ENCODE measurements at regions of chr17 and their contacts with region 1.

Region 1: GRCh38 chr17:72119873-72120641 is 763 bp upstream of the SOX9 start:
- DNase-seq: no peak
- ATAC-seq: no peak
- H3K4me3 ChIP-seq: no peak overlapping the region
- H3K4me3 Mint-ChIP-seq: no peak overlapping the region
- H3K27ac ChIP-seq: no peak overlapping the region
- H3K27ac Mint-ChIP-seq: no peak overlapping the region
- H3K4me1 ChIP-seq: peaks cover 0 to 26% of the 10 kb centered on the region in 2 experiments
- H3K4me1 Mint-ChIP-seq: peaks cover 16 to 31% (median 18%) of the 10 kb centered on the region in 3 donors
- H3K27me3 ChIP-seq: peaks cover 22 to 79% of the 10 kb centered on the region in 2 experiments
- H3K27me3 Mint-ChIP-seq: peaks cover 62 to 71% of the 10 kb centered on the region in 2 donors

Region 2: GRCh38 chr17:70767102-70767701 is 1352.9 kb before region 1 on chr17:
- CTCF ChIA-PET with region 1: interaction called in 1 of 2 experiments, 11 read pairs
- POLR2A ChIA-PET with region 1: no interaction called
- DNase-seq: no peak
- ATAC-seq: no peak
- H3K4me3 ChIP-seq: no peak overlapping the region
- H3K4me3 Mint-ChIP-seq: no peak overlapping the region
- H3K27ac ChIP-seq: no peak overlapping the region
- H3K27ac Mint-ChIP-seq: no peak overlapping the region
- H3K4me1 ChIP-seq: no peaks in the 10 kb centered on the region
- H3K4me1 Mint-ChIP-seq: no peaks in the 10 kb centered on the region
- H3K27me3 ChIP-seq: no peaks in the 10 kb centered on the region
- H3K27me3 Mint-ChIP-seq: no peaks in the 10 kb centered on the region

Region 3: GRCh38 chr17:71168053-71168741 is 951.9 kb before region 1 on chr17:
- CTCF ChIA-PET with region 1: no interaction called
- POLR2A ChIA-PET with region 1: no interaction called
- DNase-seq: no peak
- ATAC-seq: no peak
- H3K4me3 ChIP-seq: no peak overlapping the region
- H3K4me3 Mint-ChIP-seq: no peak overlapping the region
- H3K27ac ChIP-seq: no peak overlapping the region
- H3K27ac Mint-ChIP-seq: no peak overlapping the region
- H3K4me1 ChIP-seq: no peaks in the 10 kb centered on the region
- H3K4me1 Mint-ChIP-seq: no peaks in the 10 kb centered on the region
- H3K27me3 ChIP-seq: no peaks in the 10 kb centered on the region
- H3K27me3 Mint-ChIP-seq: no peaks in the 10 kb centered on the region

Region 4: GRCh38 chr17:71601894-71602504 is 518.1 kb before region 1 on chr17:
- CTCF ChIA-PET with region 1: no interaction called
- POLR2A ChIA-PET with region 1: no interaction called
- DNase-seq: no peak
- ATAC-seq: no peak
- H3K4me3 ChIP-seq: no peak overlapping the region
- H3K4me3 Mint-ChIP-seq: no peak overlapping the region
- H3K27ac ChIP-seq: no peak overlapping the region
- H3K27ac Mint-ChIP-seq: no peak overlapping the region
- H3K4me1 ChIP-seq: no peaks in the 10 kb centered on the region
- H3K4me1 Mint-ChIP-seq: no peaks in the 10 kb centered on the region
- H3K27me3 ChIP-seq: no peaks in the 10 kb centered on the region
- H3K27me3 Mint-ChIP-seq: no peaks in the 10 kb centered on the region

Measured in T-cell (primary cell).